Activated CD4-positive, alpha-beta T cell treated with anti-CD3 and anti-CD28 coated beads for 36 hours (primary cell): ENCODE measurements at regions of chr9 and their contacts with region 1.

Region 1: GRCh38 chr9:134449221-134449894 is 123.1 kb downstream of the RXRA start:
- DNase-seq: peak; percentile 90
- ATAC-seq: peak; percentile 100
- H3K4me3 Mint-ChIP-seq: no peak overlapping the region
- H3K27ac Mint-ChIP-seq: no peak overlapping the region
- H3K4me1 Mint-ChIP-seq: peaks cover 5% of the 10 kb centered on the region
- H3K27me3 Mint-ChIP-seq: no peaks in the 10 kb centered on the region

Region 2: DNA sequence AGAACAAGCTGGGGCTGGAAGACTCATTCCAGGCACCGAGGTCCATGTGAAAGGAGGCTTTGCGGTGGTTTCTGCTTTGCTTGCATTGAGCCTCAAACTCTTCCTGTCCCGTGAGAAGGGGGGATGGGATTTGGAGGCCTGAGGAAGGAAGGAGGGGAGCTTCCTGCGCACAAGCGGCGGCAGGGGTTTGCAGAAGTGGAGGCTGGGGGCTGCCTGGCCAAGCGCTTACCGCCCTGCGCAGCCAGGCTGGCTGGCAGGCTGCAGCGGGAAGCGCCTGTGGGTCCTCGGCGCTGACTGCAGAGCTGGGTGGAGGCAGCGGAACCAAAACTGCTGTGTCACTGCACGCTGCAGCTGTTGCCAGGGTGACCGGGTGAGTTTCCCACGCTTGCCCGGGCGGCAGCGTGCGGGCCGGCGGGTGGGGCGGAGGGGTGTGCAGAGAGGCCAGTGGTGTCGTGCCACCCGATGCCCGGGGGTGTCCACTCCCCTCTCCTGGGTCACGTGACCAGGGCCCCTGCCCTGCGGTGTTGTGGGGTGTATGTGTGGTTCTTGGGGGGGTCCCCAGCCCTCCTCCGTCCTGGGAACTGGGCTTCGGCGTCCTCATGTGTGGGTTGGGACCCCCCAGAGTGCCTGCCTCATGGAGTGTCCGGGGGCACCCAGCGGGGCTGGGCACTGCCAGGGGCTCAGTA is 42.1 kb before region 1 on chr9:
- CTCF ChIA-PET with region 1: no interaction called
- POLR2A ChIA-PET with region 1: no interaction called
- intact Hi-C with region 1: no loop called
- DNase-seq: peak; percentile 90
- ATAC-seq: peak; percentile 85
- H3K4me3 Mint-ChIP-seq: peak overlapping the region; percentile 62
- H3K27ac Mint-ChIP-seq: peak overlapping the region; percentile 60
- H3K4me1 Mint-ChIP-seq: peaks cover 36% of the 10 kb centered on the region
- H3K27me3 Mint-ChIP-seq: peaks cover 2% of the 10 kb centered on the region

Region 3: DNA sequence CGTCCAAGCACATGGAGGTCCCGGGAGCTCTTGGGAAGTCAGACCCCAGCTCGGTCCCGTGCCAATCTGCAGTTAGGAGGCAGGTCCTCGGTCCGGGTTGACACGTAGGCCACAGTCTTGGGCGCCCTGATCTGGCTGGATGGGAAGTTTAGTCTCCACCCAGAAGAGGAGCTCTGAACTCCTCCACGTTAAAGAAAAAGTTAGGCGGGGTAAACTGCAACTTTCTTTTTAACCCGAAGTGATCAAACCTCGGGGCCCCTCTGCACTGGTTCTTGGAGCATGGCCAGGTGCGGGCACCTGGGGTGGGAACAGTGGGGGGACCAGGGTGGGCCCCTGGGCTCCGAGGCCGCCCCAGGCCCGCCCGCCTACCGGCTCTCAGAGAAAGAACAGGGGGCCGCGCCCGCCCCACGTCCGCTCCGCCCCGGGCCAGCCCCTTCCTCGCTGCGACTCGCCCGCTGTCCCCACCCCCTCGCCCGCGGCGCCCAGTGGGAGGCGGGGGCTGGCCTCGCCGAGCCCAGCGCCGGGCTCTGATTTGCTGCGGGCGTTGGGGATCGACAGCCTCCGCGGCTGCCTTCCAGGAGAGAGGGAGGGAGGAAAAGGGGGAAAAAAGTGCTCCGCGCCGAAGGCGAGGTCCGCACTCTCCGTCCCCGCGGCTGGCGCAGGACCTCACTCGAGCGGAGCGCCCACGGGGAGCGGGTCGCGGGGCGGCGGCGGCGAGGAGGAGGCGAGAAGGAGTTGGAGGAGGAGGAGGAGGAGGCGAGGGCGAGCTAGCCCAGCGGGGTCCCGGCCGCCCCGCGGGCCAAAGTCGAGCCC is 192.0 kb after region 1 on chr9 and contains the start of gene COL5A1:
- CTCF ChIA-PET with region 1: no interaction called
- POLR2A ChIA-PET with region 1: no interaction called
- intact Hi-C with region 1: loop called in 1 of 2 experiments (anchors 5 kb)
- DNase-seq: peak; percentile 62
- ATAC-seq: peak; percentile 90
- H3K4me3 Mint-ChIP-seq: no peak within 1 kb of the TSS
- H3K27ac Mint-ChIP-seq: no peak within 1 kb of the TSS
- H3K4me1 Mint-ChIP-seq: peaks cover 2% of the 10 kb centered on the region
- H3K27me3 Mint-ChIP-seq: peaks cover 13% of the 10 kb centered on the region
- total RNA-seq, gene COL5A1: 0.07 to 0.16 TPM

Region 4: GRCh38 chr9:134689321-134690181 is 240.2 kb after region 1 on chr9:
- CTCF ChIA-PET with region 1: interaction called, 3 read pairs
- POLR2A ChIA-PET with region 1: no interaction called
- intact Hi-C with region 1: loop called in 1 of 2 experiments (anchors 2 kb)
- DNase-seq: peak; percentile 52
- ATAC-seq: no peak
- H3K4me3 Mint-ChIP-seq: no peak overlapping the region
- H3K27ac Mint-ChIP-seq: no peak overlapping the region
- H3K4me1 Mint-ChIP-seq: peaks cover 7% of the 10 kb centered on the region
- H3K27me3 Mint-ChIP-seq: no peaks in the 10 kb centered on the region

Region 5: GRCh38 chr9:134738869-134739659 is 289.7 kb after region 1 on chr9:
- CTCF ChIA-PET with region 1: no interaction called
- POLR2A ChIA-PET with region 1: no interaction called
- intact Hi-C with region 1: loop called (anchors 1 to 2 kb)
- DNase-seq: peak; percentile 60
- ATAC-seq: no peak
- H3K4me3 Mint-ChIP-seq: no peak overlapping the region
- H3K27ac Mint-ChIP-seq: no peak overlapping the region
- H3K4me1 Mint-ChIP-seq: no peaks in the 10 kb centered on the region
- H3K27me3 Mint-ChIP-seq: no peaks in the 10 kb centered on the region

Region 6: DNA sequence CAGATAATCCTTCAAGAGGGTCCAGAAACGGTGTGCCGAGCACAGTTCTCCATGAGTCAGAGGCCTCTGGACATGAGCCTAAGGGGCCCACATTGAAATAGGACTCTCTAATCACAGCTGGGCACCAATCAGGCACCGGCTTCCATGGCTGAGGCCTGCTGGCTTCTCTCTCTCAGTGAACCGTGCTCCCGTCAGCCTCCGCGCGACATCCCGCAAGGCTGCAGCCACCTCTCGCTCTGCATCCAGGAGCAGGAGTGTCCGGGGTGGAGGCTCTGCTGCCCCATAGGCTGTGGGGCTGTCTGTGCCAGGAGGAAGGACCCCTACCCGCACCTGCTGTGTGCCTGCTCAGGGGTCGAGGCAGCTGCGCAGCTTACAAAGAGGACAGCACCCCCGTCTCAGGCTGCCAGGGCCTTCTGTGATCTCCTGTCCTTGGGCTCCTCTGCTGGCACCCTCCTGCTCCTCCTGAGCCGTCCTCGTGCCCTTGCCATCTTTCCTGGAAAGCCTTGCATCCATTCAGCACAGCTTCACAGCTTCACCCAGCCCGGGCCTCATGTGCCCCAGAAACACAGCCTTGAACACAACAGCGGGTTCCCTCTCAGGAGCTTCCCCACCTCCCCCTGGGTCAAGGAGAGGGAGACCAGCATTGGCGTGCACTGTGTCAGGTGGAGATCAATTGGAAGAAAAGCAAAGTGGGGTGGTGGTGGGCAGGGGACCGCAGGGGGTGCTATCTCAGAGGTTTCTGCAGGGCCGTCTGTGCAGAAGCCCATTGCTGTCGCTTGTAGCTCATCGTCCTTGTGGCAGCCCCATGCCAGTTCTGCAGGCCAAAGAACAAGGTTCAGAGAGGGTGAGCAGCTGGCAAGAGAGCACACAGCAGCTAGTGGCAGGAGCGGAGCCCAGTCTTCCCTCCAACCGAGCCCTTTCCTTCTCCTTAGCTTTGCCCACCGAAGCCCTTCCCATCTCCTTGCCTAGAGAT is 491.2 kb after region 1 on chr9:
- CTCF ChIA-PET with region 1: no interaction called
- POLR2A ChIA-PET with region 1: interaction called, 14 read pairs
- intact Hi-C with region 1: no loop called
- DNase-seq: no peak
- ATAC-seq: no peak
- H3K4me3 Mint-ChIP-seq: no peak overlapping the region
- H3K27ac Mint-ChIP-seq: no peak overlapping the region
- H3K4me1 Mint-ChIP-seq: no peaks in the 10 kb centered on the region
- H3K27me3 Mint-ChIP-seq: no peaks in the 10 kb centered on the region